ENCODE measurements at regions of chr6 and their contacts with region 1.

Region 1: DNA sequence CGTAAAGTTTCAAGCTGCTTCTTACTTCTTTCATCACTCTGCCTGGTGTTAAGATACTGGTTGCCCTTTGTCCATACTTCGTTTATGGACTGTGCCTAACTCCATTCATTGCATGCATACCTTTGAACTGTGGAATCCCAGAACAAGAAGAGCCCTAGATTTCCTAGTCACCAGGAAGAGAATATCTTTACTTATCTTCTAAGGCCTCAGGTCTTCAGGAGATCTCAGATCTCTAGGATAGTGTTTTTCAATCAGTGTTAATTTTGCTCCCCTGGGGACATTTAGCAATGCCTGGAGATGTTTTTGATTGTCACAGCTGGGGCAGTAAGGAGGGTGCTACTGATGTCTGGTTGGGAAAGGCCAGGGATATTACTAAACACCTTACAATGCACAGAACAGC is 35.5 kb upstream of the GJA1 start:
- DNase-seq: peak in 1 of 3 donors; percentile 17
- ATAC-seq: peak; percentile 90
- H3K4me3 ChIP-seq: no peak overlapping the region
- H3K4me1 ChIP-seq: peaks cover 3% of the 10 kb centered on the region
- CTCF ChIP-seq: no peak

Region 2: DNA sequence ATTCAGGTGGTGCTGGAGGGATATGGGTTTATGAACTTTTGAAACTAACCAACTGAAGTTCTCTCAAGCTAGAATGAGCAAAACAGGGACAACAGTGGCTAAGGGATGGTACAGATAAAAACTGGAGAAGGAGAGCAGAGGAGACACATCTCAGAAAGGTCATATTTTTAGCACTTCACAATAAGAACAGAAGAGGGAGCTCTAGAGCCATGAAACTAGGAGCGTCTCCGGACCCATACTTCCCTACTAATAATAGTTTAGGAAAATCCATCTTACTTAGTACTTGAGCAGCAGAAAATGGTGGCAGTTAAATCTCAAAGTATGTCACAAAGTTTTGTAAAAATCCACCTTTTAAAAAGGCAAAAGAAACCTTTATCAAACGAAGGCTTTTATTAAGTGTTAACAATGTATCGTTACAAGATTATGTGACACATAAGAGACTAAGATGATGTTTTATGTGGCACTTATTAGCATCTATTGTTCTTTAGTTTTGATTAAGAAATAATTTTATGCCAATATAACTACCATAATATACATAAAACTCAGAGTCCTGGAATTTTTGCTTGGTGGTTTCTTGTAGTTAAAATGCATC is 344.3 kb before region 1 on chr6:
- intact Hi-C with region 1: loop called in 1 of 2 experiments (anchors 10 kb)
- DNase-seq: peak in 1 of 3 donors; percentile 10
- ATAC-seq: peak; percentile 78
- H3K4me3 ChIP-seq: no peak overlapping the region
- H3K4me1 ChIP-seq: no peaks in the 10 kb centered on the region
- CTCF ChIP-seq: peak; percentile 52

Measured in mucosa of descending colon (tissue), 3 donors.